A673 (cell line): ENCODE measurements at regions of chr19 and their contacts with region 1.

Region 1: DNA sequence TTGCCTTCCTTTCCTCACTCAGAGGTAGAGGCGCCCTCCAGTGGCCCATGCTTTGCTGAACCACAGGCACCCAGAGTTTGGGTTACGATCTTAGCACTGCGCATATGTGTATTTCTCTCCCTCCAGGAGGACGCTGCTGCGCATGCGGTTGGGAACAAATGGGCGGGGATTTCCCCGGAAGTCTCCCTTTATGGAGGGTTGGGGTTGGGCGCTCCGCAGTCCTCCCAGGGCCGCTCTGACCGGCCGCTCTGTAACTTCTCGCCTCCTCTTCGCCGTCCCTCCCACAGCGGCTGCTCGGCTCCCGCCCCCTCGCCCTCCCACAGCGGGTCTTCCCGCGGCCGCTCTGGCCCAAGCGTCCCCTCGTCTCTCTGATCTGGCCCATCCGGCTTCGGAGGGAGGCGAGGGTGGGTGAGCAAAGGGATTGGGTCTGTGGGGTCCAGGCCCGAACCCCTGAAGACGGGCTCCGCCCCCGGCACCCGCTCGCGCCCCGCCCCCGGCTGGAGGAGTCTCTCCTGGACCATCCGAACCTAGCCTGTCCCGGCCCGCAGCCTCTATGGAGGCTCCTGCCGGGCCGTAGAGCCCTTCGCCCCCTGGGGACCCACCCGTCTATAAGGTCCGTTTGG is at the start of gene MEGF8:
- DNase-seq: peak; percentile 100
- H3K4me3 ChIP-seq: peak within 1 kb of the TSS; percentile 88
- H3K27ac ChIP-seq: peak within 1 kb of the TSS; percentile 79
- H3K4me1 ChIP-seq: peaks cover 8% of the 10 kb centered on the region
- H3K27me3 ChIP-seq: peaks cover 9% of the 10 kb centered on the region
- CTCF ChIP-seq: peak; percentile 98
- total RNA-seq, gene MEGF8: 28.5 and 33.6 TPM in 2 replicates

Region 2: DNA sequence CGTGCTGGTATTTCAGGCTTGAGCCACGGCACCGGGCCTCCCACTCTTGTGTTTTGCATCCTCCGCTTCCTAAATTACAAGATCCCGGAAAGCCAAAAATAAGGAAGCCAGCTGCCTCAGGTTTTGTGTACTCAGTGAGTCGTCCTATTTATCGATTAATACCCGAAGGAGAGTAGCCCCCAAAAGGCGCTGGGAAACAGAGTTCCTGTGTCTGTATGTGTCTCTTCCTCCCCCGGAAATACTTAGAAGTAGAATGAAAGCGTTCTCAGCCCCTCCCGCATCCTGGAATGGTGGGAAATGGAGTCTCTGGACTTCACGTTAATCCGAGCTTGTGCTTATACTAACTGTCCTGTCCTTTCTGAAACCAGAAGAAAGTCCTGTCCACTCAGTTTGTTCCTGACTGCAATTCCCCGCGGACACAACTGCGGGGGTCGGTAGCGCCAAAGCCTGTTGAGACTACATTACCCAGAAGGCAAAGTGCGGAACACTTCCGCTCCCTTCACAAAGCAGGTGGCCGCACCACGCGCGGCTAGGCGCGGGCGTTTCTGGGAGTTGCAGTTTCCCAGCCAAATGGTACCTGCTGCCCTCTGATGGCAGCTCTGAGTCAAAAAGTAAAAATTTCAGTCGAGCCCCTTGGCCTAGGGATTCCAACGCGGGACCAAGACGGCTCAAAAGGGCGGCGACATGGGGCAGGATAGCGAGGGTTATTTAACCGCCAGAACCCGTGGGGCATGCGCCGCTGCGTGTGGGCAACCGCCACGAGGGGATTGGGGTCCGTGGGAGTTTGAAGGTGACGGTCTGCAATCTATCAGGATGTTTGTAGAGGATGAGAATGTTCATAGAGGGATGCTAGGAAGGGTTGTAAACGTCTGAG is 80.8 kb before region 1 on chr19:
- CTCF ChIA-PET with region 1: no interaction called
- POLR2A ChIA-PET with region 1: no interaction called
- intact Hi-C with region 1: loop called (anchors 1 kb)
- DNase-seq: peak; percentile 98
- H3K4me3 ChIP-seq: peak overlapping the region; percentile 72
- H3K27ac ChIP-seq: peak overlapping the region; percentile 82
- H3K4me1 ChIP-seq: peaks cover 40% of the 10 kb centered on the region
- H3K27me3 ChIP-seq: no peaks in the 10 kb centered on the region
- CTCF ChIP-seq: peak; percentile 79

Region 3: GRCh38 chr19:42283143-42284065 is 42.0 kb before region 1 on chr19:
- CTCF ChIA-PET with region 1: no interaction called
- POLR2A ChIA-PET with region 1: no interaction called
- intact Hi-C with region 1: no loop called
- DNase-seq: peak; percentile 97
- H3K4me3 ChIP-seq: peak overlapping the region; percentile 45
- H3K27ac ChIP-seq: peak overlapping the region; percentile 81
- H3K4me1 ChIP-seq: peaks cover 52% of the 10 kb centered on the region
- H3K27me3 ChIP-seq: no peaks in the 10 kb centered on the region
- CTCF ChIP-seq: no peak